ENCODE measurements at regions of chr10 and their contacts with region 1.

Region 1: GRCh38 chr10:95374597-95375209 is 83.9 kb upstream of the PDLIM1 start:
- DNase-seq: peak; percentile 83
- H3K4me3 ChIP-seq: no peak overlapping the region
- H3K27ac ChIP-seq: no peak overlapping the region
- H3K4me1 ChIP-seq: no peaks in the 10 kb centered on the region
- H3K27me3 ChIP-seq: no peaks in the 10 kb centered on the region
- CTCF ChIP-seq: peak; percentile 90

Region 2: GRCh38 chr10:95430231-95430951 is 55.7 kb after region 1 on chr10:
- intact Hi-C with region 1: loop called (anchors 5 kb)
- DNase-seq: peak; percentile 54
- H3K4me3 ChIP-seq: no peak overlapping the region
- H3K27ac ChIP-seq: no peak overlapping the region
- H3K4me1 ChIP-seq: no peaks in the 10 kb centered on the region
- H3K27me3 ChIP-seq: no peaks in the 10 kb centered on the region
- CTCF ChIP-seq: peak; percentile 97

Region 3: GRCh38 chr10:95445837-95446486 is 71.3 kb after region 1 on chr10:
- intact Hi-C with region 1: loop called (anchors 5 kb)
- DNase-seq: peak; percentile 76
- H3K4me3 ChIP-seq: no peak overlapping the region
- H3K27ac ChIP-seq: no peak overlapping the region
- H3K4me1 ChIP-seq: no peaks in the 10 kb centered on the region
- H3K27me3 ChIP-seq: no peaks in the 10 kb centered on the region
- CTCF ChIP-seq: peak; percentile 86

Region 4: DNA sequence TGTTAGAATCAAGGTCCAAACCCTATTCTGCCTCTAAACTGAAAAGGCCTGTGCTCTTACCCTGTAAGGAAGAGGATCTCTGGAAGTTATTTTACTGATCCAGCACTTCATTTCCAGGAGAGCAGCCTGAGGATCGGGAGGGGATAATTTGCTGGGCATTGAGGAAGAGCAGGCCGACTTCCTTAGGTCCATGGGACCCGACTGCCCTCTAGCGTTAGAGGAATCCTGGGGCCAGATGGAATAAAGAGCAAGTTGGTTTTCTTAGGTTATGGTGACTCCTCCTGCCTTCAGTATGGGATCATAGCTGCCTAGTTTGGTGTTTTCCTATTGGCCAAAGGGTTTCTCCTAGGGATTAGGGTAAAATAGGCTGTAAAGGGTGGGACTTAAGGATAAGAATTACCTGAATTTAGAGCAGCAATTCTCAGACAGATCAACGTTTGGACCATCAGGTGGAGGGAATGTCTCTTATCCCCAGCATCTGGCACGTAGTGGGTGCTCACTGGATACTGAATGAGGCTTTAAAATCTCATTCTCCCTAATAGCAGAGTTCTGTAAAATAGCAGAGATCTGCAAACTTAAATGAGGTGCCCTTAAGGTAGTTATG is 226.5 kb after region 1 on chr10:
- intact Hi-C with region 1: loop called (anchors 2 kb)
- DNase-seq: peak; percentile 90
- H3K4me3 ChIP-seq: no peak overlapping the region
- H3K27ac ChIP-seq: no peak overlapping the region
- H3K4me1 ChIP-seq: no peaks in the 10 kb centered on the region
- H3K27me3 ChIP-seq: no peaks in the 10 kb centered on the region
- CTCF ChIP-seq: peak; percentile 89

Region 5: DNA sequence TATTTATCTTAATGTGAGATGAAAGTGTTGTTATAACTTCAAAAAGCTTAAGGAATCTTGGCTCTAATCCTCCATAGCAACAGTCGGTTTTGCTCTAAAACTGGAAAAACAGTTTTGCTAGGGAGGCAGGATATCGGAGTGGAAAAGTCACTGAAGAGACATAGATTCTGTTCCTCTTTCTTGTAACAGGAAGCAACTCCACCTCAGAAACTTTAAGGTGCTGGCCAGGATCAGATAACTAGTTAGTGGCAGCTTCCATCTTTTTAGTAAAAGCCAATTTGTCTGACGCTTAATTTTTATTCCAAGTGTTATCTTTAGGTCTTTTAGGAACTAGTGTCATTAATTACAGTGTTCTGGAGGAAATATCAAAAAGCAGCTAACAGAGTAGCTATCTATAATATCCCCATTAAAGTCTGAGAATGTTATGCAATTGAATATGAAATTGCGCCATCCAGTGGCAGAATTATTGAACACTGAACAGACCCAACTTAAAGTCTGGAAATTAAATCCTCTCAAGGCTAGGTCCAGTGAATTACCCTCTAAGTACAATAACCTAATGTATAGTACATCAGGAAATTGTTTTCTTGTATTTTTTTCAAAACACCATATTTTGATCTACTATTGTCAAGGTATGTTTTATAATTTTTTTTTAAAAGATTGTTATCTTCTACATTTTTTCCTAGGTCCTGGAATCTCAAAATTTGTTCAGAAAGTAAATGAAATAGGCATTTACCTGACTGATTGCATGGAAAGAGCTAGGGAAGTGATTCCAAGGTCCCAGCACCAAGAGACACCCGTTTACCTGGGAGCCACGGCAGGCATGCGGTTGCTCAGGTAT is 467.2 kb after region 1 on chr10:
- intact Hi-C with region 1: loop called (anchors 10 kb)
- DNase-seq: peak; percentile 67
- H3K4me3 ChIP-seq: no peak overlapping the region
- H3K27ac ChIP-seq: peak overlapping the region; percentile 18
- H3K4me1 ChIP-seq: no peaks in the 10 kb centered on the region
- H3K27me3 ChIP-seq: no peaks in the 10 kb centered on the region
- CTCF ChIP-seq: peak; percentile 49

Measured in colonic mucosa (tissue), 4 donors.